HEK293T (cell line): ENCODE measurements at regions of chr22 and their contacts with region 1.

Region 1: GRCh38 chr22:50620593-50621355 is 7.2 kb downstream of the ARSA start:
- DNase-seq: peak; percentile 77

Region 2: DNA sequence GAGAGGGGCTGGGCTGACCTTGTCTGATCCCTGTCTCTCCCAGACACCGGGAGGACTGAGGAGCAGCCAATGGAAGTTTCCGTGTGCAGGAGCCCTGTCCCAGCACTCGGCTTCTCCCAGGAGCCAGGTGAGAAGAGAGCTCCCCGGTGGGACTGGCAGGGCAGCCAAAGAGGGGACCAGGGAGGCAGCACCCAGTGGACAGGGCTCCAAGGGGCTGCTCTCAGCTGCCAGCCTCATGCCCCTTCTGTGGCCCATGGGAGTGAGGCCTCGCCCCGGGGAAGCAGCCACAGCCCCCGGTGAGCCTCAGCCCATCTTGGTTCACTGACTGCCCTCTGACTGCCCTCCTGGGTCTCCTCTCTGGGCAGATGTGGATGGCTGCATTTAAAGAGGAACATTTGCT is 102.2 kb before region 1 on chr22:
- CTCF ChIA-PET with region 1: no interaction called
- POLR2A ChIA-PET with region 1: no interaction called
- DNase-seq: no peak

Region 3: GRCh38 chr22:50582562-50583293 is 38.0 kb before region 1 on chr22 and contains the start of gene CHKB:
- CTCF ChIA-PET with region 1: interaction called, 3 read pairs
- POLR2A ChIA-PET with region 1: interaction called, 10 read pairs
- DNase-seq: peak; percentile 100